ENCODE measurements at regions of chr3 and their contacts with region 1.

Region 1: DNA sequence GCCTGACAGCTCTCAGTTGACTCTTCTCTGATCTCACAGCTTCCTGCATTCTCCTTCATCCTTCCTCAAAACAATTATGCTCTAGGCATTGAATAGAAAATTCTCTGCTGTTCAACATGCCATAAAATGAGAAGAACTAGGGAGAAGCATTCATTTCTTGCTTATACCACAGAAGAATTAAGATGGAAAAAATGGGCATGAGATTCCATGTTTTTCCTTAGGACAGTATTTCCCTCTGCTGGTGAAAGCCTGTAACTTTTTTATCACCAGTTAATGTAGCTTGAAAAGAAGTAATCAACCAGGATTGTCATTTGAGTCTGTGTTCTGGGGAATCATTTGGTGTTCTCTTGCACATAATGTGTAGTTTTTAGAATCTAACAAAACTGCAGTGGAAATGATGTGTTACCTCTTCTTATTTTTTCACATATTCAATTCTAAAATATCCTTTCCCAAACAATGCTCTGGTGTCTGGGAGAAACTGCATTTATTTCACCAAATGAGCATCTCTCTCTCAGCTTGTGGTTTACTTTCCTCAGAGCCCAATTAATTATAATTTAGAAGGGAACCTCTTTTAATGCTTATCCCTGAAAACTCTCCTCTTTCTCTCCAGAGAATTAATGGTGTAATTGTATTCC is 92.8 kb upstream of the DCBLD2 start:
- DNase-seq: peak in 2 of 4 donors; percentile 34 to 58
- ATAC-seq: peak; percentile 82
- H3K4me3 ChIP-seq: no peak overlapping the region
- H3K27ac ChIP-seq: no peak overlapping the region
- H3K4me1 ChIP-seq: no peaks in the 10 kb centered on the region
- H3K27me3 ChIP-seq: no peaks in the 10 kb centered on the region
- CTCF ChIP-seq: peak; percentile 19 to 49

Region 2: GRCh38 chr3:98679986-98680385 is 314.3 kb before region 1 on chr3:
- intact Hi-C with region 1: no loop called
- DNase-seq: no peak
- ATAC-seq: no peak
- H3K4me3 ChIP-seq: no peak overlapping the region
- H3K27ac ChIP-seq: no peak overlapping the region
- H3K4me1 ChIP-seq: no peaks in the 10 kb centered on the region
- H3K27me3 ChIP-seq: no peaks in the 10 kb centered on the region
- CTCF ChIP-seq: no peak

Region 3: DNA sequence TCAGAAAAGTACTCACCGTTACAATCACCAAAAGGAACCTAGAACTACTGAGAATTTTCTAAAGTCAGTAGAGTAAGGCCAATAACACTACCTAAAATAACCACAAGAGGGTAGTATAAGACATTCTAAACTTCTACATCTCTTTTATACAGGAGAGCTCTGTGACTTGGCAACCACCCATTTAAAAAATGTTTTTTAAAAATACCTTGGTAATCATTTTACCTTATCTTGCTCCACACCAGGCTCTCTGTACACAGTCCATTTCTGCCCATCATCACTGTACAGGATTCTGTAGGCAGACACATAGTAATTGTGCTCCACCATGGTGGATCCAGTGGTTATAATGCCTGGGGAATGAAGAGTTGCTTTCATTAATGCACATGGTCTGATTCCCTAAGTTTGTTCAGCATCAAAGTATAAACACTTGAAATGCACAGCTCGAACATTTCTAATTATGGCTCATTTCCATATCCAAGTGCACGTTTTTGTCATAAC is 176.7 kb before region 1 on chr3:
- intact Hi-C with region 1: loop called in 1 of 2 experiments (anchors 2 kb)
- DNase-seq: peak in 2 of 4 donors; percentile 47 to 62
- ATAC-seq: peak; percentile 87
- H3K4me3 ChIP-seq: no peak overlapping the region
- H3K27ac ChIP-seq: no peak overlapping the region
- H3K4me1 ChIP-seq: no peaks in the 10 kb centered on the region
- H3K27me3 ChIP-seq: no peaks in the 10 kb centered on the region
- CTCF ChIP-seq: peak; percentile 69 to 75

Region 4: GRCh38 chr3:98884675-98885371 is 109.4 kb before region 1 on chr3:
- intact Hi-C with region 1: no loop called
- DNase-seq: no peak
- ATAC-seq: peak; percentile 65
- H3K4me3 ChIP-seq: no peak overlapping the region
- H3K27ac ChIP-seq: no peak overlapping the region
- H3K4me1 ChIP-seq: peaks cover 9 to 22% of the 10 kb centered on the region in 2 donors
- H3K27me3 ChIP-seq: no peaks in the 10 kb centered on the region
- CTCF ChIP-seq: no peak

Region 5: DNA sequence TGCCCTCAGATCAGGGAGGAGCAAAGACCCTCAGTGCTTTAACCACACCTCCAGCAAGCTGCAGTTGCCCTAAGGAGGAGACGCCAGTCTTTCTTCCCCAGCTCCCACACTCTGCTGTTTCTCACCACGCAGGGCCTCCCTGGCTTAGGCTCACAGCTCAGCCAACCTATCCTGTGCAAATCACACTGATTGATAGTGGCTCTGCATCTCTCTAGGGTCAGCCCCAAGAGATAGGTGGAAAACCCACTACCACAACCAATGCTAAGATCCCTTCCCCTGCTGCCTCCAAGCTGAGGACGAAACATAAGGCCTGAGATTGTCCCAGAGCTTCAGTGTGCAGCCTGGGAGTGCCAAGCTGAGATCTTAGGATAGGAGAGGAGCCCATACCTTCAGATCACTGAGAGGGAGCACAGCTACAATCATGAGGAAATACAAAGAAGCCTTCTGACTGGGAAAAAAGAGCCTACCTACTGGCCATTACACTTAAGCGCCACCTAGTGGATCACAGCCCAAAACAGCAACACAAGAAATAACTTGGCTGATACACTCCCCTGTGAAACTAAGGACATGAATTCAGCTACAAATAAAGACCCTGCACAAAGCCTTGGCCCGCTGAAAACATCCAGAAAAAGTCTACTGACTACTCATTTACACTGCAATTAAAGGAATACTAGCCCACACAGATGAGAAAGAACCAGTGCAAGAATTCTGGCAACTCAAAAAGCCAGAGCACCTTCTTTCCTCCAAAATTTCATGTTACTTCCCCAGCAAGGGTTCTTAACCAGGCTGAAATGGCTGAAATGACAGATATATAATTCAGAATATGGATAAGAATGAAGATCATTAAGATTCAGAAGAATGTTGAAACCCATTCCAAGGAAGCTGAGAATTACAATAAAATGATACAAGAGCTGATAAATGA is 178.8 kb after region 1 on chr3:
- intact Hi-C with region 1: no loop called
- DNase-seq: peak in 2 of 4 donors; percentile 11 to 42
- ATAC-seq: peak; percentile 85
- H3K4me3 ChIP-seq: no peak overlapping the region
- H3K27ac ChIP-seq: no peak overlapping the region
- H3K4me1 ChIP-seq: peaks cover 0 to 3% of the 10 kb centered on the region in 2 donors
- H3K27me3 ChIP-seq: no peaks in the 10 kb centered on the region
- CTCF ChIP-seq: peak; percentile 38 to 68

Measured in left lung (tissue), 14 donors.